ENCODE measurements at regions of chr10 and their contacts with region 1.

Region 1: GRCh38 chr10:102917962-102918816 is at the start of gene CNNM2:
- DNase-seq: peak; percentile 100
- H3K4me3 Mint-ChIP-seq: peak within 1 kb of the TSS; percentile 90
- H3K27ac Mint-ChIP-seq: peak within 1 kb of the TSS; percentile 84
- H3K4me1 Mint-ChIP-seq: peaks cover 45% of the 10 kb centered on the region
- H3K27me3 Mint-ChIP-seq: peaks cover 4% of the 10 kb centered on the region
- total RNA-seq, gene CNNM2: 4.0 to 4.2 TPM

Region 2: DNA sequence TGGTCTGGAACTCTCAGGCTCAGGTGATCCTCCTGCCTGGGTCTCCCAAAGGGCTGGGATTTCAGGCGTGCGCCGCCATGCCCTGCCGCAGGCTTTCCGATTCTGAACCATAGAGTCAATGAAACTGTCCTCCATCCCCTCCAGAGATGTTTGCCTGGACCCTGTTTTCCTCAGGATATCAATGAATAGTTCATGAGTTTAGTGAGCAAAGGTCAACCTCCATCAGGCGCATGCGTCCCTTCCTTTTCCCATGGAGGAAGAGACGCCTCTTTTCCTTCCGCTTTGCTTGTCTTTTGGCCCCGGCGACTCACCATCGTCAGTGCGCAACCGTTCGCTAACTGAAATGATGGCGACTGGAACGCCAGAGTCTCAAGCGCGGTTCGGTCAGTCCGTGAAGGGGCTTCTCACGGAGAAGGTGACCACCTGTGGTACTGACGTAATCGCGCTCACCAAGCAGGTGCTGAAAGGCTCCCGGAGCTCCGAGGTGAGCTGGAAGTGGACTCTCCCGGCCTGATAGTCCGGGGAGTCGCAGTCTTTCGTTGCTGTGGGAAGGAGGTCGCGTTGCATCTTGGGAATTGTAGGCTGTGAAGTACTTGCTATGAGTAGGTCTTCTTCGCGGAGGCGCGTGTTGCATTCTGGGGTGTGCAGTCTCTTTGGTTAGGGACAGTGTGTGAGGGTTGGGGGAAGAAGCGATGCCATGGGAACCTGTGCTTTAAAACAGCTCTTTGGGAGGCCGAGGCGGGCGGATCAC is 64.1 kb before region 1 on chr10 and contains the start of gene BORCS7:
- CTCF ChIA-PET with region 1: interaction called, 4 read pairs
- POLR2A ChIA-PET with region 1: interaction called, 5 read pairs
- intact Hi-C with region 1: loop called (anchors 1 kb)
- DNase-seq: peak; percentile 93
- H3K4me3 Mint-ChIP-seq: peak within 1 kb of the TSS; percentile 96
- H3K27ac Mint-ChIP-seq: peak within 1 kb of the TSS; percentile 94
- H3K4me1 Mint-ChIP-seq: peaks cover 14% of the 10 kb centered on the region
- H3K27me3 Mint-ChIP-seq: no peaks in the 10 kb centered on the region
- total RNA-seq, gene BORCS7: 5.0 to 5.9 TPM

Region 3: DNA sequence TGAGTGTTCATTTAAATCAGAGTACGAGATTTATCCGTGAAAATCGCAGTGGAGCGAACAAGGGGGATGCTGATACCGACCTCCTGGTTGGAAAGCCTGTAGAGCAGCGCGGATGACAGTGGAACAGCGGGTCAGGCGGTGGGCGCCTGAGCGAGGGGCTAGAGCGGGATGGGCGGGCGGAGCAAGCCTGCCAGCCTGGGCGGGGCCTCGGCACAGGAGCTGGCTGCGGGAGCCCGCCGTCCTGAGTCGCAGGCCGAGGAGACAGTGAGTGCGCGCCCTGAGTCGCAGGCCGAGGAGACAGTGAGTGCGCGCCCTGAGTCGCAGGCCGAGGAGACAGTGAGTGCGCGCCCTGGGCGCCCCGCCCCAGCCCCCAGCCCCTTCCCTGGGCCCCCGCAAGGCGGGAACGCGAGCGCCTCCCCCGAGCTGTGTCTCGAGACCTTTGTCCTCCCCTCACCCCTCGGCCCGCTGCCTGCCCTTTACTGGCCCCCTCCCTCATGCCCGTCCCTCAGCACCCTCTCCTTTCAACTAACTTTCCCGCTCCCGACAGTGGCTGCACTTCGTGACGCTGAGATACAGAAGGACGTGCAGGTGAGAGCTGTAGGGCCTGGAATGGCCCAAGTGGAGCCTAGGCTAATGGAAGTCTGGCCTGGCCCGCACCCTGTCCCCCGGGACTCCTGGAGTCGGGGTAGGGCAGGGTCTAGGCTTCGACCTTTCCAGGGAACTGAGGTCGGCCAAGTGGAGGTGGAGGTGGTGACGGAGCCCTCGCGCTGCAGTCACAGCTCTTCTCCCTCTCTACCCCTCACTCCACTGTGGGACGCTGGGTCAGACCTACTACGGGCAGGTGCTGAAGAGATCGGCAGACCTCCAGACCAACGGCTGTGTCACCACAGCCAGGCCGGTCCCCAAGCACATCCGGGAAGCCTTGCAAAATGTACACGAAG is 48.7 kb before region 1 on chr10 and contains the start of gene AS3MT:
- CTCF ChIA-PET with region 1: no interaction called
- POLR2A ChIA-PET with region 1: no interaction called
- intact Hi-C with region 1: no loop called
- DNase-seq: peak; percentile 26
- H3K4me3 Mint-ChIP-seq: peak within 1 kb of the TSS; percentile 60
- H3K27ac Mint-ChIP-seq: no peak within 1 kb of the TSS
- H3K4me1 Mint-ChIP-seq: peaks cover 5% of the 10 kb centered on the region
- H3K27me3 Mint-ChIP-seq: peaks cover 17% of the 10 kb centered on the region
- total RNA-seq, gene AS3MT: 0.59 to 0.85 TPM

Region 4: DNA sequence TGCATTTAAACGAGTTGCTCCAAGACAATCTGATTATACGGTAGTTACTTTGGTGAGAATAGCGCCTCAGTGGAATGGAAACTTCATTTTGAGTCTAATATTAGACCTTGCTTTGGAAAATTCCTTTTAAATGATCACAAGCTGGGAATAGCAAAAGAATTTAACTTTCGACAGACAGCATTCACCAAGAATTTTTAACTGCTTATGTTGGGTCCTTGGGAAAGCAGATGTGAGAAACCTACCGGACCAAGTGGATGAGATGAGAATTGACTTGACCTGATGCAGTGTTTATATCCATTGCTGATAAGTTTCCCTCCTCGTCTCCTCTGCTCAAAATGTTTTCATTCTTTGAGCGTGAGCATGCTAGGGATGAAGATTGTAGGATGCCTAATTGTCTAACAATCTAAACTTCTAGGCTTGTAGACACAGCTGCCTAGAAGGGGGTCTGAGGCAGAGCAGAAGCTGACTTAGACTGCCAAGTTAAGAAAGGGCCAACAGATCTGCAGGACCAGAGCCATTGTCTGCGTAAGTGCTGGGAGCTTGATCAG is 126.8 kb after region 1 on chr10:
- CTCF ChIA-PET with region 1: interaction called, 11 read pairs
- POLR2A ChIA-PET with region 1: no interaction called
- intact Hi-C with region 1: no loop called
- DNase-seq: no peak
- H3K4me3 Mint-ChIP-seq: no peak overlapping the region
- H3K27ac Mint-ChIP-seq: no peak overlapping the region
- H3K4me1 Mint-ChIP-seq: no peaks in the 10 kb centered on the region
- H3K27me3 Mint-ChIP-seq: no peaks in the 10 kb centered on the region

Region 5: GRCh38 chr10:103069453-103070331 is 151.5 kb after region 1 on chr10:
- CTCF ChIA-PET with region 1: interaction called, 108 read pairs
- POLR2A ChIA-PET with region 1: interaction called, 8 read pairs
- intact Hi-C with region 1: loop called (anchors 1 kb)
- DNase-seq: peak; percentile 80
- H3K4me3 Mint-ChIP-seq: no peak overlapping the region
- H3K27ac Mint-ChIP-seq: no peak overlapping the region
- H3K4me1 Mint-ChIP-seq: peaks cover 19% of the 10 kb centered on the region
- H3K27me3 Mint-ChIP-seq: no peaks in the 10 kb centered on the region

Region 6: DNA sequence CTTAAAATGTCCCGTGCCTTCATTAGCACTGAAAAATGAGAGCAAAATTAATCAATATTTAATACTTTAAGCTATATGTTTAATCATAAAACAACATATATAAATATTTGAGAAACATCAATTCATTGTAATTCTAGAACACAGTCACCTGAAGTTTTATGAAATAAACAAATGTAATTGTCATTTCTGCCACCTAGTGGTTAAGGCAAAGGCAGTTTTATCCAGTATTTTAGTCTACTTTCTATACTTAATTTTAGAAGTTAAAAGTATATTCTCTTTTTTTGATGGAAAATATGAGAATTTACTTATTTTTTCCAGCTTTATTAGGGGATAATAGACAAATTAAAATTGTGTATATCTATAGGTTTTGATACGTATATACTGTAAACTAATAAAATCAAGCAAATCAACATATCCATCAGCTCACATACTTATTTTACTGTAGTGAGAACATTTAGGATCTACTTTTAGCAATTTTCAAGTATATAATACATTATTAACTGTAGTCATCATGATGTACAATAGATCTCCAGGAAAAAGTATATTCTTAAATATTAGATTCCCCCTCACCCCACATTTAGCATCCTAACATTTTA is 415.8 kb after region 1 on chr10:
- CTCF ChIA-PET with region 1: interaction called, 8 read pairs
- POLR2A ChIA-PET with region 1: no interaction called
- intact Hi-C with region 1: loop called (anchors 10 kb)
- DNase-seq: no peak
- H3K4me3 Mint-ChIP-seq: no peak overlapping the region
- H3K27ac Mint-ChIP-seq: no peak overlapping the region
- H3K4me1 Mint-ChIP-seq: no peaks in the 10 kb centered on the region
- H3K27me3 Mint-ChIP-seq: no peaks in the 10 kb centered on the region